Calu3 (cell line): ENCODE measurements at regions of chrX and their contacts with region 1.

Region 1: GRCh38 chrX:130994671-130995070 is 63.5 kb upstream of the ARHGAP36 start:
- DNase-seq: peak; percentile 32
- H3K4me3 Mint-ChIP-seq: no peak overlapping the region
- H3K27ac Mint-ChIP-seq: no peak overlapping the region
- H3K4me1 Mint-ChIP-seq: no peaks in the 10 kb centered on the region
- H3K27me3 Mint-ChIP-seq: peaks cover 64% of the 10 kb centered on the region
- CTCF ChIP-seq: peak; percentile 17

Region 2: DNA sequence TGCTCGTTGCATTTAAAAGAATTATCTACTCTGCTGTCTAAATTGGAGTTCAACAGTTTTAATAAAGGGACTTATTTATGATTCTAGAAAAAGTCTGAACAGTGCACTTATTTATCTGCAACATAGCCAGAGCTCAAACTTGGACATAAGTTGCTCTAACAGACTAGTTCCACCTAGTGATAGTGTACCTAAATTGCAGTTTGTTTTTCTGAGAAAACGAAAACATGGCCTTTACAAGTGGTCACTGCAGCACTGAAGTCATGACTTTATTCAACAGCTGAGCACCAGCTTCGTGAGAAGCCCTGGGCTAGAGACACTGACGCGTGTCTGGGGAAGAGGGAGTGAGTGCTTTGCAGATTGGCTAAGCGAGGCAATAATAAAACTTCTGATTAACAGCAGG is 371.7 kb after region 1 on chrX:
- CTCF ChIA-PET with region 1: no interaction called
- intact Hi-C with region 1: no loop called
- DNase-seq: no peak
- H3K4me3 Mint-ChIP-seq: no peak overlapping the region
- H3K27ac Mint-ChIP-seq: no peak overlapping the region
- H3K4me1 Mint-ChIP-seq: no peaks in the 10 kb centered on the region
- H3K27me3 Mint-ChIP-seq: no peaks in the 10 kb centered on the region
- CTCF ChIP-seq: no peak

Region 3: GRCh38 chrX:131633285-131633917 is 638.7 kb after region 1 on chrX:
- CTCF ChIA-PET with region 1: no interaction called
- intact Hi-C with region 1: loop called (anchors 5 kb)
- DNase-seq: peak; percentile 55
- H3K4me3 Mint-ChIP-seq: no peak overlapping the region
- H3K27ac Mint-ChIP-seq: no peak overlapping the region
- H3K4me1 Mint-ChIP-seq: no peaks in the 10 kb centered on the region
- H3K27me3 Mint-ChIP-seq: no peaks in the 10 kb centered on the region
- CTCF ChIP-seq: peak; percentile 45

Region 4: DNA sequence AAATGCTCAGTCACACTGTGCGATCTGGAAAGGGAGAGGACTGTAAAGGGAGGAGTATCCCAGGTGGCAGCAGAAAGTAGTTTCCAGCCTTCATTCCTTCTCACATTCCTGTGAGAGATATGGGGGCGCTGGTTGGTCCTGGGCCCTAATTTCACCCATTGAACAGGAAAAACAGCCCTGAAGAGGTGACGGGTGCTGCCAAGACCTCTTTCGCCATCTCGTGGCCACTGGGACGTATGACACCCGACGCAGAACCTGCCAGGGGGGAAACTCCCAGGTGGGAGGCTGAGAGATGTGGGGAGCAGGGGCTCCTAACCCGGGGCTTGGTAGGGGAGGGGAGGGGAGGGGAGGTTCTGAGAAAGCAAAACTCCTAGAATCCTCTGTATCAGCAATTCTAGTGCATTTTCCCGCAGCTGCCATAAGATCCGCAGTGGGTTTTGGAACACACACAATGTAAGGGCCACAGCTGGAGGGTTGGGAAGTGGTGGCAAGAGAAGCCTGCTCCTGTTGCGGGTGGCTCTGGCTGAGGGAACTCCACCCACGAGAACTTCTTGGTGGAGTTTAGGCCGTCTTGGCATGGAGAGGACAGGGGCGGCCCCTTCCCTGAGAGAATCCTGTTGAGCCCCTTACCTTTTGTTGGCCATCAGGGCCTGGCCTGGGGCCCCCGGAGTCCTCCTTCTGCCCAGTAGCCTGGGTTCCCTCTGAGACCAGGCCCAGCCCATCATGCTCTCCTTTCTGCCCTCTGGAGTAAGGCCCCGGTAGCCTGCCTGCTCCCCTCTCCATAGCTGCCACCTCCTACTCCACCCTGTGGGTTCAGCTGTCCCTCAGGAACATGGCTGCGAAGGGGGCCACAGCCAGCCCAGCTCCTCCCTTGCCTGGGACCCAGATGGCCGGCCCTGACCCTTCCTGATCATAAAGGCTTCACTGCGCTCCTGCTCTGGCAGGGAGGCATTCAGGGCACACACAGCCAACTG is 683.3 kb after region 1 on chrX:
- CTCF ChIA-PET with region 1: no interaction called
- intact Hi-C with region 1: loop called (anchors 5 kb)
- DNase-seq: peak; percentile 50
- H3K4me3 Mint-ChIP-seq: no peak overlapping the region
- H3K27ac Mint-ChIP-seq: no peak overlapping the region
- H3K4me1 Mint-ChIP-seq: no peaks in the 10 kb centered on the region
- H3K27me3 Mint-ChIP-seq: peaks cover 10% of the 10 kb centered on the region
- CTCF ChIP-seq: peak; percentile 71